Mammary epithelial cell (primary cell): ENCODE measurements at regions of chr4 and their contacts with region 1.

Region 1: GRCh38 chr4:7719354-7720174 is 220.1 kb downstream of the AFAP1 start:
- DNase-seq: peak; percentile 12
- H3K4me3 ChIP-seq: no peak overlapping the region
- H3K27ac ChIP-seq: no peak overlapping the region
- H3K4me1 ChIP-seq: no peaks in the 10 kb centered on the region
- H3K27me3 ChIP-seq: no peaks in the 10 kb centered on the region
- CTCF ChIP-seq: peak; percentile 68 to 86

Region 2: GRCh38 chr4:7295911-7296660 is 423.5 kb before region 1 on chr4:
- CTCF ChIA-PET with region 1: no interaction called
- dilution Hi-C with region 1: no loop called
- in situ Hi-C with region 1: no loop called
- intact Hi-C with region 1: loop called (anchors 10 kb)
- DNase-seq: peak; percentile 19
- H3K4me3 ChIP-seq: no peak overlapping the region
- H3K27ac ChIP-seq: no peak overlapping the region
- H3K4me1 ChIP-seq: no peaks in the 10 kb centered on the region
- H3K27me3 ChIP-seq: no peaks in the 10 kb centered on the region
- CTCF ChIP-seq: peak; percentile 54 to 80

Region 3: GRCh38 chr4:7328898-7329638 is 390.5 kb before region 1 on chr4:
- CTCF ChIA-PET with region 1: no interaction called
- dilution Hi-C with region 1: no loop called
- in situ Hi-C with region 1: no loop called
- intact Hi-C with region 1: loop called (anchors 10 kb)
- DNase-seq: peak; percentile 35
- H3K4me3 ChIP-seq: no peak overlapping the region
- H3K27ac ChIP-seq: no peak overlapping the region
- H3K4me1 ChIP-seq: peaks cover 8% of the 10 kb centered on the region
- H3K27me3 ChIP-seq: no peaks in the 10 kb centered on the region
- CTCF ChIP-seq: peak in 1 of 2 donors; percentile 23